ENCODE measurements at regions of chr1 and their contacts with region 1.

Region 1: GRCh38 chr1:110630839-110631663 is 24.9 kb upstream of the KCNA2 start:
- DNase-seq: peak; percentile 75 to 83
- ATAC-seq: peak; percentile 44 to 73 (median 62)
- H3K4me3 ChIP-seq: peak overlapping the region in 1 of 10 donors; percentile 10
- H3K27ac ChIP-seq: peak overlapping the region in 1 of 10 donors; percentile 79
- H3K4me1 ChIP-seq: peaks cover 4 to 49% (median 16%) of the 10 kb centered on the region in 9 donors
- H3K27me3 ChIP-seq: peaks cover 0 to 26% (median 4%) of the 10 kb centered on the region in 7 donors
- CTCF ChIP-seq: peak; percentile 78 to 92 (median 88)

Region 2: GRCh38 chr1:110548381-110548780 is 82.7 kb before region 1 on chr1:
- intact Hi-C with region 1: no loop called
- DNase-seq: no peak
- ATAC-seq: peak in 1 of 8 donors; percentile 47
- H3K4me3 ChIP-seq: no peak overlapping the region
- H3K27ac ChIP-seq: no peak overlapping the region
- H3K4me1 ChIP-seq: no peaks in the 10 kb centered on the region
- H3K27me3 ChIP-seq: peaks cover 0 to 45% (median 31%) of the 10 kb centered on the region in 7 donors
- CTCF ChIP-seq: peak in 7 of 9 donors; percentile 22 to 42 (median 40)

Region 3: DNA sequence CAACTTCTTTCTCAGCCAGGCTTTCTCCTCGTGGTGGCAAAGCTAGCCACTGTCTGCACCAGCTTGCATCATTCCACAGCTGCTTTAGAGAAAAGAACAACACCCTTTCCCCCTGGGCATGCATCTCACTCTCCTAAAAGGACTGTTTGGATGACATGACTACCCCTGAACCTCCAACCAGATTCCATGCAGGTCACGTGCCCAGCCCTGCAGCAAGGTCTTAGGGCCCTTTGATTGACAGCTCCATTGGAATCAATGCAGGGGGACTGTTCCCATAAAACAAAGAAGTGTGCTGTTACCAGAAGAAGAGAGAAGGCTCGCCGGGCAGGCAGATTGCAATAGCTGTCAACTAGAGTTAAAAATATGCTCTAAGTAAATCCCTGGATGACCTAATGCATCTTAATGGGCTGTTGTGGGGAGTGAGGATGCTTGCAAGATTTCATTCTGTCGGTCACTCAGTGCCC is 49.3 kb before region 1 on chr1:
- intact Hi-C with region 1: no loop called
- DNase-seq: no peak
- ATAC-seq: no peak
- H3K4me3 ChIP-seq: no peak overlapping the region
- H3K27ac ChIP-seq: no peak overlapping the region
- H3K4me1 ChIP-seq: no peaks in the 10 kb centered on the region
- H3K27me3 ChIP-seq: peaks cover 0 to 13% (median 3%) of the 10 kb centered on the region in 7 donors
- CTCF ChIP-seq: no peak

Region 4: DNA sequence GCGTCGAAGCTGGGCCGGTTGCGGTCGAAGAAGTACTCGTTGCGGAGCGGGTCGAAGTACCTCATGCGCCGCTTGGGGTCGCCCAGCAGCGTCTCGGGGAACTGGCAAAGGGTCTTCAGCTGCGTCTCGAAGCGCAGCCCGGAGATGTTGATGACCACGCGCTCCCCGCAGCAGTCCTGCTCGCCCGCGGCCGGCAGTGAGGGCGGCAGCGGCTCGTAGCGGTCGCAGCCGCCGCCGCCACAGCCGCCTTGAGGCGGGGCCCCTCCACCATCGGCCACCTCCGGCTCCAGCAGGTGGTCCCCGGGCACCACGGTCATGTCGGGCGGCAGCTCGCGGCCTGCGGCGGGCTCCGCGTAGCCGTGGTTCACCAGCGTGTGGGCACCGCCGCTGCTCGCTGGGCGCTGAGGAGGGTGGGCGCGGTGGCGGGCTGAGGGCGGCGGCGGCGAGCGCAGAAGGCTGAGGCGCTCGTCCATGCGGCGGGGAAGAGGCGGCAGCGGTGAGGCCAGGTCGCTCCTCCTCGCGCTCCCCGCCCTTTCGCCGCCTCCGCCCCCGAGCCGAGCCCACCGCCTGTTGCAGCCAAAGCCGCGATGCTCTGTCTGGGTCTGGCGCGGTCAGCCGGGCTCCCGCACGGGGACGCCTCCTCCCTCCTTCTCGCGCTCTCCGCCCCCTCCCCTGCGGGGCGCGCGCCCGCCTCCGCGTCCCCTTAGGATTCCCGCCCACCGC is 43.4 kb after region 1 on chr1 and contains the start of gene KCNA3:
- intact Hi-C with region 1: loop called in 1 of 10 experiments (anchors 5 kb)
- DNase-seq: peak; percentile 18 to 38
- ATAC-seq: peak; percentile 50 to 80 (median 71)
- H3K4me3 ChIP-seq: peak within 1 kb of the TSS; percentile 49 to 70 (median 62)
- H3K27ac ChIP-seq: peak within 1 kb of the TSS in 6 of 10 donors; percentile 21 to 84 (median 42)
- H3K4me1 ChIP-seq: peaks cover 0 to 44% (median 13%) of the 10 kb centered on the region in 9 donors
- H3K27me3 ChIP-seq: peaks cover 8 to 73% (median 59%) of the 10 kb centered on the region in 7 donors
- CTCF ChIP-seq: peak in 1 of 9 donors; percentile 39
- total RNA-seq, gene KCNA3: 0.16 to 1.8 (median 0.40) TPM in 9 of 10 donors, not detected in the other

Region 5: GRCh38 chr1:110718452-110718851 is 87.4 kb after region 1 on chr1:
- intact Hi-C with region 1: loop called in 2 of 10 experiments (anchors 1 kb)
- DNase-seq: peak; percentile 38 to 67
- ATAC-seq: peak; percentile 78 to 98 (median 92)
- H3K4me3 ChIP-seq: no peak overlapping the region
- H3K27ac ChIP-seq: peak overlapping the region in 1 of 10 donors; percentile 31
- H3K4me1 ChIP-seq: peaks cover 0 to 14% (median 0%) of the 10 kb centered on the region in 9 donors
- H3K27me3 ChIP-seq: peaks cover 0 to 3% (median 0%) of the 10 kb centered on the region in 7 donors
- CTCF ChIP-seq: no peak

Region 6: GRCh38 chr1:110756506-110756905 is 125.5 kb after region 1 on chr1:
- intact Hi-C with region 1: loop called in 3 of 10 experiments (anchors 1 to 5 kb)
- DNase-seq: peak; percentile 39 to 55
- ATAC-seq: peak; percentile 59 to 98 (median 81)
- H3K4me3 ChIP-seq: no peak overlapping the region
- H3K27ac ChIP-seq: no peak overlapping the region
- H3K4me1 ChIP-seq: no peaks in the 10 kb centered on the region
- H3K27me3 ChIP-seq: peaks cover 0 to 32% (median 9%) of the 10 kb centered on the region in 7 donors
- CTCF ChIP-seq: no peak

Region 7: GRCh38 chr1:110766025-110766647 is 135.1 kb after region 1 on chr1:
- intact Hi-C with region 1: loop called (anchors 1 to 5 kb)
- DNase-seq: peak in 1 of 2 donors; percentile 42
- ATAC-seq: peak in 4 of 8 donors; percentile 58 to 69 (median 60)
- H3K4me3 ChIP-seq: no peak overlapping the region
- H3K27ac ChIP-seq: no peak overlapping the region
- H3K4me1 ChIP-seq: peaks cover 0 to 7% (median 0%) of the 10 kb centered on the region in 9 donors
- H3K27me3 ChIP-seq: peaks cover 0 to 38% (median 22%) of the 10 kb centered on the region in 7 donors
- CTCF ChIP-seq: peak; percentile 60 to 89 (median 85)

Region 8: DNA sequence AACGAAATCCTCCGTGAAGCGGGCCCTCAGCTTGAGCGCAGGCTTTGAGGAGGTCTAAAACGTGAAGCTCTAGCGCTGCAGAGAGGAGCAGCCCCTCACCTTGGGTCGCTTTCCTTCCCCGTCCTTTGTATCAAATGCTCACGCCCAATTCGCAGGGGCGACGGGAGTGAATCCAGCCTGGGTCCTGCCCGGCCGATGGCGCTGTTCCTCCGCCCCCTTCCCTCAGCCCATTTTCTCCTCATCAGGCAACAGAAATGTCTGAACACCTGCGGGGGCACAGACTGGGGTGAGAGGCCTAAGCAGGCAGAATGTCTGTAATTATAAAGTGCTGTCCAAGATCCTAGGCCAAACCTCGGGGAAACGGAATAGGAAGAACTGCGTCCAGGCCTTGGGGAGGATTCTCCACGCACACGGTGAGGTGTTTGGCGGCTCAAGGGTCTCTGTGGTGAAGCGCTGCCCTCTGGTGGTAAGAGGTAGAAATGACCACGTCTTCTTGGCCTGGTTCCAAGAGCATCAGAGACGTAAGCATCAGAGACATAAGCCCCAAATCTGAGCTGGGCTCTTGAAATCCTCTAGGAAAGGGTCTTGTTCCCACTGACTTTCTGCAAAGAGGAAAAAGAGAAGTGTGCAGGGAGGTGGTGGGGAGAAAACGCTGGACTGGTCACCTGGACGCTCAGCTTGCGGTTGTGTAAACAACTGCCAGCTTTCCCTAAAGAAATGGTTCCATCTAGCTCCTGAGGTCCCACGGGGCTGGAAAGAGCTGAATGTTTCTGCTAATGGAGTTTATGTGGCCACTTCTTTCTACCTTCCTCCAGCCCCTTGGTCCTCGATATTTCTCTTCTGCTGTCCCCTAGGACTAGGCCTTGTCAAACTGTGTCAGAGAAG is 149.8 kb after region 1 on chr1:
- intact Hi-C with region 1: loop called in 9 of 10 experiments (anchors 1 to 5 kb)
- DNase-seq: peak; percentile 38 to 54
- ATAC-seq: peak; percentile 43 to 72 (median 60)
- H3K4me3 ChIP-seq: no peak overlapping the region
- H3K27ac ChIP-seq: no peak overlapping the region
- H3K4me1 ChIP-seq: peaks cover 0 to 35% (median 3%) of the 10 kb centered on the region in 9 donors
- H3K27me3 ChIP-seq: peaks cover 0 to 31% (median 11%) of the 10 kb centered on the region in 7 donors
- CTCF ChIP-seq: peak; percentile 72 to 93 (median 88)

Measured in heart right ventricle (tissue), 16 donors.